Ovary (tissue), 10 donors: ENCODE measurements at regions of chr7 and their contacts with region 1.

Region 1: DNA sequence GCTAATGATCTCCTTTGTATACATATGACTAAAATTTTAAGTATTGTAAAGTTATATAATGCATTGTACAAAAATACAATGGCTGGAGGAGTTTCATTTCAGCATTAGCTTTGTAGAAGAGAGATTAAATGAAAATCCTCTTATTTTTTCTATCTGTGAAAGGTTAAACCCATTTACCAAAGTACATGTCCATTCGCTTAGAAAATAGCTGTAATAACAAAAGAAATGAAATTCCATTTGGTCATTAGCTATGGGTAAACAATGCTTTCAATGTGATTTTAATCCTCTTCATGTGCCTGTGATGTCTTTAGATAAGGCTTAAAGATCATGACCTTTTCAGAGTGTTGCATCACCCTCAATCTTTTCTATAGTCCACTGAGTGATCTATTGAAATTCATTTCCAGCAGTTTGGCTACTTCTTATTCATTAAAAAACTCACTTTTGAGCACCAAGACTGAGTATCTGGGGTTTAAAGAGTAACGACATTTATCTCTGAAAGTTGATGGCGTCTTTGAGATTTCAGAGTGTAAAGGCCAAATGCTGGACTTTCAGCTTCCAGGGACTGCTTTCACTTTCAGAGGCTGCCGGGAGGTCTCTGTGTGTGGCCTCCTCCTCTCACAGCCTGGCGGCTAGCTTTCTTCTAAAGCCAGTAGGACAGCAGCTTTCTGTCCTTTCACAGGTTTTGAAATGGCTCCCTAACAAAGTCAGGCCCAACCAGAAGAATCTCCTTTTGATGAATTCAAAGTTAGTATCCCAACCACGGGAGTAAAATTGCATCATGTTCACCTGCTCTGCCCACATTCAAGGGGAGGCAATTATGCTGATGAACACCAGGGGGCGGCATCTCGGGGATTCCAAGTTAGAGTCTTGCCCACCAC is 701.4 kb upstream of the COBL start:
- DNase-seq: no peak
- H3K4me3 ChIP-seq: no peak overlapping the region
- H3K27ac ChIP-seq: no peak overlapping the region
- H3K4me1 ChIP-seq: no peaks in the 10 kb centered on the region
- H3K27me3 ChIP-seq: no peaks in the 10 kb centered on the region
- CTCF ChIP-seq: no peak
- EP300 ChIP-seq: no peak
- POLR2A ChIP-seq: no peak

Region 2: GRCh38 chr7:52811537-52811936 is 793.5 kb after region 1 on chr7:
- intact Hi-C with region 1: loop called in 1 of 4 experiments (anchors 5 kb)
- DNase-seq: no peak
- H3K4me3 ChIP-seq: no peak overlapping the region
- H3K27ac ChIP-seq: no peak overlapping the region
- H3K4me1 ChIP-seq: no peaks in the 10 kb centered on the region
- H3K27me3 ChIP-seq: no peaks in the 10 kb centered on the region
- CTCF ChIP-seq: no peak
- EP300 ChIP-seq: no peak
- POLR2A ChIP-seq: no peak